Ascending aorta (tissue), 2 donors: ENCODE measurements at regions of chr3 and their contacts with region 1.

Region 1: DNA sequence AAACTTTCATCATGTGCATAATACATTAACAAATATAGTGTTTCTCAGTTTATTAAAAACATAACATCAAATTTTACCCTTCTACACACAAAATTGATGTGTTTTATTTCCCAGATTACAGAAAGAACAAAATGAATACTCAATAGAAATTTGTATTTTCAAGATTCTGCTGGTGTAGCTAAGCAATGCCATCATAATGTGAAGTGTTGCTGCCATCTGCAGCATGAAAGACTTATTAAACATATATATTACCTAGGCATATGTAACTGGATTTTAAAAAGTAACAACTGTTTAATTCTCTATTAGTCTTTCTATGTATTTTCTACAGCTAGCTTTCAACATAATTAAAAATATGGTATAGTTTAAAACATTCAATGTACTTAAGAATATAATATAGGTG is 27.5 kb downstream of the PLSCR5 start:
- DNase-seq: no peak
- H3K4me3 ChIP-seq: no peak overlapping the region
- H3K27ac ChIP-seq: no peak overlapping the region
- H3K4me1 ChIP-seq: no peaks in the 10 kb centered on the region
- H3K27me3 ChIP-seq: no peaks in the 10 kb centered on the region
- CTCF ChIP-seq: peak; percentile 34 to 46 (median 36)

Region 2: GRCh38 chr3:146218880-146219866 is 358.5 kb before region 1 on chr3:
- intact Hi-C with region 1: loop called (anchors 10 kb)
- DNase-seq: no peak
- H3K4me3 ChIP-seq: no peak overlapping the region
- H3K27ac ChIP-seq: no peak overlapping the region
- H3K4me1 ChIP-seq: peaks cover 0 to 12% of the 10 kb centered on the region in 2 donors
- H3K27me3 ChIP-seq: no peaks in the 10 kb centered on the region
- CTCF ChIP-seq: peak; percentile 31 to 74 (median 56)

Region 3: GRCh38 chr3:146334151-146334550 is 243.5 kb before region 1 on chr3:
- intact Hi-C with region 1: loop called (anchors 5 kb)
- DNase-seq: no peak
- H3K4me3 ChIP-seq: no peak overlapping the region
- H3K27ac ChIP-seq: no peak overlapping the region
- H3K4me1 ChIP-seq: no peaks in the 10 kb centered on the region
- H3K27me3 ChIP-seq: no peaks in the 10 kb centered on the region
- CTCF ChIP-seq: peak in 1 of 3 experiments; percentile 15